Dorsolateral prefrontal cortex (tissue), 120 donors: ENCODE measurements at regions of chr17 and their contacts with region 1.

Region 1: GRCh38 chr17:35390663-35391062 is 17.2 kb upstream of the SLFN11 start:
- DNase-seq: no peak
- H3K4me3 ChIP-seq: no peak overlapping the region
- H3K27ac ChIP-seq: no peak overlapping the region
- H3K27me3 ChIP-seq: peaks cover 0 to 48% (median 15%) of the 10 kb centered on the region in 45 donors
- CTCF ChIP-seq: no peak

Region 2: DNA sequence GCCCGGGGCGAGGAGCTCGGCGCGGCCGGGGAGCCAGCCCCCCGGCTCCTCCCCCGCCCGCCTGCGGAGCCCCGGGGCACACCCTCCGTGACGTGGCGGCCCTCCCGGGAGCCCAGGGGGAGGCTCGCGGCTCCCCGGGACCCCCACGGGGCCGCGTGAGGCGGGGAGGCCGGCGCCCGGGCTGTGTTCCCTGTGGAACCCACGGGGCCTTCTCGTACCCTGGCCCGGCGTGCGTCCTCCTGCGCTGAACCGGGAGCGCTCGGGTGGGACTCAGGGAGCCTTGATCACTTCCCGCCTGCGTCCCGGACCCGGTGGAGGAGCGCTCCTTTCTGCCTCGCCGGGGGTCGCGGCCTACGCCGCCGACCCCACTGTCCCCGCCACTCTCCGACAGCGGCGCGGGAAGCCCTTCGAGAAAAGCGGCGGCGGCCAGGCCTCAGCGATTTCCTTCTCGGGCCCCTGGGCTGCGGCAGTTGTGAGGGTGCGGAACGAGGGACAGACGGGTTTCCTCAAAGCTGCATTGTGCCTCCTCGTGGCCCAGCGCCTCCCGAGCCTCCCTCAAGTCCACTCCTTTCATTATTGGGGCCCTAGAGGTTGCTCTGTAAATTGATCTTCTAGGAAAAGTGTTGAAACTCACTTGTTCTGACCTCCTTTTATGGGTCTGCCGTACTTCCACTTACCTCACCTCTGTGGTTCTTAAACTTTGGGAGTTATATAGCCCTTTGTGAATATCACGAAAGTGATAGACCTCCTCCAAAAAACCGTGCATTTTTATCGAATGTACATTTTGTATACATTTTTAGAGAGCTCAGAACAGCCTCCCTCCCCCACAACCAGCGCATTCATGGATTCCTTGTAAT is 409.8 kb before region 1 on chr17:
- intact Hi-C with region 1: no loop called
- DNase-seq: peak in 9 of 10 donors; percentile 41 to 73 (median 61)
- H3K4me3 ChIP-seq: peak overlapping the region; percentile 55 to 100 (median 95)
- H3K27ac ChIP-seq: peak overlapping the region; percentile 77 to 99 (median 94)
- H3K27me3 ChIP-seq: no peaks in the 10 kb centered on the region
- CTCF ChIP-seq: peak in 33 of 56 donors; percentile 13 to 54 (median 33)

Region 3: GRCh38 chr17:35416659-35417058 is 26.0 kb after region 1 on chr17:
- intact Hi-C with region 1: no loop called
- DNase-seq: no peak
- H3K4me3 ChIP-seq: no peak overlapping the region
- H3K27ac ChIP-seq: no peak overlapping the region
- H3K27me3 ChIP-seq: peaks cover 0 to 6% (median 0%) of the 10 kb centered on the region in 45 donors
- CTCF ChIP-seq: no peak

Region 4: DNA sequence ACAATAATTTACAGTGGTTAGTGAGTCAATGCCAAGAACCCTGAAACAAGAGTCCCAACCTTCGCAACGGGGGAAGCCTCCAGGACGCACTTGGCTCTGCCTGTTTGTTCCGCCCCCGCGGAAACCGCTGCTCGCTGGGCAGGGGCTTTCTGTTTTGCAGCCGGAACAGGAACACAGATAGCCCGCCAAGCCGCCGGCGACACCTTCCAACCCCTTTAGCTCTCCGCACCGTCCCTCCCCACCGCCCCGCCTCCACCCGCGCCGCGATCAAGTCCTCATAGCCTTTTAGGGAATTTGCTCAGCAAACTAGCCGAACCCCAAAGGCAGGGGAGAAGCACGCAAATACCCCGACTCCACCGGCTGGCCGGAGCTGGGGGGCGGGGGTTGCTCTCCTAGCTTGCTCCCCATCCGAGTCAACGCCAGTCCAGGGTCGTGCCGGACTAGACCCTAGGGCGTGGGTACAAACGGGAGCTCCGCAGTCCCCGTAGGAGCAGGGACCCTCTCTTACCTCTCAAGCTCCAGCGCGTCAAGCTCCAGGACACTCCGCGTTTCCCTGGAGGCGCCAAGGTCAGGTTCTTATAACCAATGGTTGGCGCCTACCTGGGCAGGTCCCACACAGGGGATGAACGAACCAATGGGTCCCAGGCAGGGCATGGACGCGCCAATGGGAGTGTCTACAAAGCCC is 57.7 kb after region 1 on chr17 and contains the start of gene SLFN13:
- intact Hi-C with region 1: loop called in 1 of 2 experiments (anchors 10 kb)
- DNase-seq: no peak
- H3K4me3 ChIP-seq: peak within 1 kb of the TSS in 57 of 59 donors; percentile 7 to 65 (median 40)
- H3K27ac ChIP-seq: peak within 1 kb of the TSS in 2 of 59 donors; percentile 0
- H3K27me3 ChIP-seq: peaks cover 0 to 91% (median 64%) of the 10 kb centered on the region in 45 donors
- CTCF ChIP-seq: no peak
- total RNA-seq, gene SLFN13: 0.39 to 5.6 (median 2.2) TPM